HCT116 (cell line): ENCODE measurements at regions of chr4 and their contacts with region 1.

Region 1: DNA sequence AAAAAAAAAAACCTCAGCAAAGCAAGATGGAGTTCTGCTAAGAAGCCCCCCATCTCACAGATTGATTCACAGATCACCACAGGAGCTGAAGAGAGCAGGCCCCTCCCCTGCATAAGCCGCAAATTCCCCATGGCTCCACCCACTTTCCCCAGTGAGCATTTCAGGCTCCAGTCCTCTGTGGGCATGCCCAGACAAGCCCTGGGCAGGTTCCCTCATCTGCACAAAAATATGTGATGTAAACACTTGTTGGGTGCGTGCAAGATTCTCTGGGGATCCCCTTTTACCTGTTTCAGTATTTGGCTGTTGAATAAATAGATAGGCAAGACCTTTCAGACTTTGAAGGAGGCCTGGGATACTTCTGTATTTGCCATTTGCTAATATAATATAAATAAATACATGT is 514.3 kb downstream of the PCDH7 start:
- DNase-seq: peak; percentile 45
- ATAC-seq: peak; percentile 71
- H3K4me3 ChIP-seq: no peak overlapping the region
- H3K27ac ChIP-seq: peak overlapping the region; percentile 89
- H3K4me1 ChIP-seq: peaks cover 52 to 66% of the 10 kb centered on the region in 2 experiments
- H3K27me3 ChIP-seq: no peaks in the 10 kb centered on the region
- CTCF ChIP-seq: no peak
- POLR2A ChIP-seq: no peak
- RAD21 ChIP-seq: no peak; the same call in 1 of the 2 replicates

Region 2: GRCh38 chr4:31052519-31052918 is 182.0 kb before region 1 on chr4:
- CTCF ChIA-PET with region 1: no interaction called
- POLR2A ChIA-PET with region 1: interaction called, 3 read pairs
- RAD21 ChIA-PET with region 1: no interaction called
- intact Hi-C with region 1: loop called (anchors 5 kb)
- DNase-seq: no peak
- ATAC-seq: no peak
- H3K4me3 ChIP-seq: peak overlapping the region in 1 of 2 experiments; percentile 3; a peak in 1 of 4 replicates
- H3K27ac ChIP-seq: peak overlapping the region; percentile 86; the same call in 1 of the 2 replicates
- H3K4me1 ChIP-seq: peaks cover 88 to 97% of the 10 kb centered on the region in 2 experiments
- H3K27me3 ChIP-seq: no peaks in the 10 kb centered on the region
- CTCF ChIP-seq: no peak
- POLR2A ChIP-seq: no peak
- RAD21 ChIP-seq: no peak

Region 3: GRCh38 chr4:31089815-31090214 is 144.7 kb before region 1 on chr4:
- CTCF ChIA-PET with region 1: no interaction called
- POLR2A ChIA-PET with region 1: no interaction called
- RAD21 ChIA-PET with region 1: no interaction called
- intact Hi-C with region 1: loop called (anchors 5 kb)
- DNase-seq: peak; percentile 97
- ATAC-seq: peak; percentile 71
- H3K4me3 ChIP-seq: peak overlapping the region in 1 of 2 experiments; percentile 19; a peak in 1 of 4 replicates
- H3K27ac ChIP-seq: peak overlapping the region; percentile 96; the same call in 1 of the 2 replicates
- H3K4me1 ChIP-seq: peaks cover 72 to 77% of the 10 kb centered on the region in 2 experiments
- H3K27me3 ChIP-seq: no peaks in the 10 kb centered on the region
- CTCF ChIP-seq: no peak
- POLR2A ChIP-seq: no peak
- RAD21 ChIP-seq: peak; percentile 33